Brain microvascular endothelial cell (primary cell): ENCODE measurements at regions of chr1 and their contacts with region 1.

Region 1: GRCh38 chr1:64242895-64243756 is 39.7 kb downstream of the UBE2U start:
- DNase-seq: peak; percentile 32
- H3K4me3 ChIP-seq: no peak overlapping the region
- H3K27ac ChIP-seq: no peak overlapping the region
- H3K27me3 ChIP-seq: no peaks in the 10 kb centered on the region
- CTCF ChIP-seq: peak; percentile 34

Region 2: GRCh38 chr1:63691701-63692425 is 551.3 kb before region 1 on chr1:
- in situ Hi-C with region 1: loop called (anchors 25 kb)
- DNase-seq: peak; percentile 85
- H3K4me3 ChIP-seq: no peak overlapping the region
- H3K27ac ChIP-seq: no peak overlapping the region
- H3K27me3 ChIP-seq: no peaks in the 10 kb centered on the region
- CTCF ChIP-seq: peak; percentile 82

Region 3: GRCh38 chr1:63917571-63918417 is 325.3 kb before region 1 on chr1:
- in situ Hi-C with region 1: loop called (anchors 25 kb)
- DNase-seq: no peak
- H3K4me3 ChIP-seq: no peak overlapping the region
- H3K27ac ChIP-seq: no peak overlapping the region
- H3K27me3 ChIP-seq: no peaks in the 10 kb centered on the region
- CTCF ChIP-seq: peak; percentile 54

Region 4: DNA sequence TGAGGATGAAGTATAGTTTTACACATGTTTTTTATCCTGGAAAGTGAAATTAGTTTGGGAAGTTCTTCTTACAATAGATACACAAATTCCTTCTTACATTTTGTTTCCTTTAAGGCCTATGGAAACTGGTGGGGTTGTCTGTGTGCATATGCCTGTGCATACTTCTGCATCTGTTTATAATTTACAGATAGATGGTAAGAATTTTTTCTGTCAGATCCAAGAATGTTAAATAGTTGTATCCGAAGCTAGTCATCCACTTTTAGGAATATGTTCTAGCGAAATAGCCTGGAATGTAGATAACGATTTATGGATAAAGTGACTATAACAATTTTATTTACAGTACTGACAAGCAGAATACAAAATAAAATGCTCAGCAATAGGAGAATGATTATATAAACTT is 275.2 kb before region 1 on chr1:
- in situ Hi-C with region 1: no loop called
- DNase-seq: no peak
- H3K4me3 ChIP-seq: no peak overlapping the region
- H3K27ac ChIP-seq: no peak overlapping the region
- H3K27me3 ChIP-seq: no peaks in the 10 kb centered on the region
- CTCF ChIP-seq: no peak

Region 5: GRCh38 chr1:64366821-64367220 is 123.7 kb after region 1 on chr1:
- in situ Hi-C with region 1: no loop called
- DNase-seq: no peak
- H3K4me3 ChIP-seq: no peak overlapping the region
- H3K27ac ChIP-seq: no peak overlapping the region
- H3K27me3 ChIP-seq: no peaks in the 10 kb centered on the region
- CTCF ChIP-seq: no peak

Region 6: GRCh38 chr1:64469977-64470664 is 227.0 kb after region 1 on chr1 and contains the start of gene CACHD1:
- in situ Hi-C with region 1: no loop called
- DNase-seq: peak; percentile 75
- H3K4me3 ChIP-seq: peak within 1 kb of the TSS; percentile 64
- H3K27ac ChIP-seq: no peak within 1 kb of the TSS
- H3K27me3 ChIP-seq: no peaks in the 10 kb centered on the region
- CTCF ChIP-seq: peak; percentile 60